Body of pancreas (tissue), 4 donors: ENCODE measurements at regions of chr1 and their contacts with region 1.

Region 1: GRCh38 chr1:245156081-245156735 is 1.4 kb downstream of the KIF26B start:
- DNase-seq: peak; percentile 87 to 90 (median 88)
- ATAC-seq: peak; percentile 92
- H3K4me3 ChIP-seq: peak overlapping the region in 1 of 2 donors; percentile 33
- H3K27ac ChIP-seq: no peak overlapping the region
- H3K4me1 ChIP-seq: peaks cover 43% of the 10 kb centered on the region
- H3K27me3 ChIP-seq: peaks cover 0 to 4% of the 10 kb centered on the region in 2 donors
- CTCF ChIP-seq: peak; percentile 62 to 94 (median 82)
- POLR2A ChIP-seq: peak in 1 of 3 donors; percentile 12

Region 2: DNA sequence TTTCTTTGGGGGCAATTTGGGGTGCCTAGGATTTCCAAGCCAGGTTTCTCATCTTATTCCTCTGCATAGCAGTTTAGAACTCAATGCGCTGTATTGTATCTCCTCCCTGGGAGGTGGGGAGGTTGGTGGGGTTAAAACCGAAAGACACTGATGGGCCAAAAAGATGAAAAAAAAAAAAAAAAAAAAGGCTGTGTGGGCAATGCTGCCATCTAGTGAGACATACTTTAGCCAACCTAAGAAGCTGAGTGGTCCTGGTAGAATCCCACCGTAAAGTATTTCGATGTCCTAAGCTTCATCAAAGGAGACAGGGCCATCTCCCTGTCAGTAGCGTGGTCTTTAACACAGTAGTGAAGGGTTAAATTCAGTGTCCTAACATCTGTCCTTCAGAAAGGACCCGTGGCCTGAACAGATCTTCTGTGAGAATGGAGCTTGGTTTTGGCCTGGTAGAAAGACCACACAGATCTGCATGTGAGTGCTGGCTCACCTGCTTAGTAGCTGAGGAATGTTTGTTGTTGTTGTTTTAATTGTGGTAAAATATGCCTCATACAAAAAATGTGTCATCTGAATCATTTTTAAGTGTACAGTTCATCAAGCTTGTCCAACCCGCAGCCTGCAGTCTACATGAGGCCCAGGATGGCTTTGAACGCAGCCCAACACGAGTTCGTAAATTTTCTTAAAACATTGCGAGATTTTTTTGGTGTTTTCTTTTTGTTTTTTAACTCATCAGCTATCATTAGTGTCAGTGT is 224.8 kb after region 1 on chr1:
- intact Hi-C with region 1: loop called (anchors 10 kb)
- DNase-seq: no peak
- ATAC-seq: no peak
- H3K4me3 ChIP-seq: no peak overlapping the region
- H3K27ac ChIP-seq: no peak overlapping the region
- H3K4me1 ChIP-seq: no peaks in the 10 kb centered on the region
- H3K27me3 ChIP-seq: no peaks in the 10 kb centered on the region
- CTCF ChIP-seq: peak in 5 of 7 experiments; percentile 10 to 40 (median 24)
- POLR2A ChIP-seq: no peak

Region 3: DNA sequence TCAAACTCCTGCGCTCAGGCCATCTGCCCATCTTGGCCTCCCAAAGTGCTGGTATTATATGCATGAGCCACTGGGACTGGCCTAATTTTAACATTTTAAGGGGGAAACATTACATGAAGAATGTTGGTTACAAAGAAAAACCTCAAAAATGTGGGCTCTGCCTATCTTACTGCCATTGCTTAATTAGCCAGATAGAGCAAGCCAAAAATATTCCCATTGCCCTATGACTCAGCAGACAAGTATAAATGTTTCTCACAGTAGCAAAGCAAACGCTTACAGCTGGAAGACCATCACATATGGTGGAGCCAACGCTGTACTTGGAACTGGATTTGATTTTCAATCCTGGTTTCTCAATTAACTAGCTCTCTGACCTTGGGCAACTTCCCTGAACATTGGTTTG is 848.9 kb after region 1 on chr1:
- intact Hi-C with region 1: loop called (anchors 5 kb)
- DNase-seq: no peak
- ATAC-seq: no peak
- H3K4me3 ChIP-seq: no peak overlapping the region
- H3K27ac ChIP-seq: no peak overlapping the region
- H3K4me1 ChIP-seq: no peaks in the 10 kb centered on the region
- H3K27me3 ChIP-seq: no peaks in the 10 kb centered on the region
- CTCF ChIP-seq: no peak
- POLR2A ChIP-seq: no peak